Mammary epithelial cell (primary cell): ENCODE measurements at regions of chr1 and their contacts with region 1.

Region 1: DNA sequence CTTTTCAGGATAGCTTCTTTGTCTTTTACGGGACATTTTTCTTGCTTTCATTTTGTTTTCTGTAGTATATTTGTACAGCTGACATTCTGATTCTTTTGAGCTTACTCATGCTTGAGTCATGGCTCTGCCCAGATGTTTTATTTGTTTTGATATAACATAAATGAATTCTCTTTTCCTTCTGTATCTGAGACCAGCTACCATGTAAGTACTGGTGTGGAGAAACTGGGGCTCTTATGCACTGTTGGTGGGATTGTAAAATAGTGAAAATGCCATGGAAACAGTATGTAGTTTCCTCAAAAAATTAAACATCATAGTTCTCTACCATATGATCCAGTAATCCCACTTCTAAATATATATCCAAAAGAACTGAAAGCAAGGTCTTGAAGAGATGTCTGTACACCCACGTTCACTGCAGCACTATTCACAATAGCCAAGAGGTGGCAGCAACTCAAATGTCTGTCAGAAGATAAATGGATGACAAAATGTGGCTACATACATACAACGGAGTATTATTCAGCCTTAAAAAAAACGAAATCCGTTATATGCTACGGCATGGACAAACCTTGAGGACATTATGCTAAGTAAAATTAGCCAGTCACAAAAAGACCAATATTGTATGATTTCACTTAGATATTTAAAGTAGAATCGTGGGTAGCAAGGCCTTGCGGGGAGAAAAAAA is 61.4 kb downstream of the EIF2B3 start:
- DNase-seq: peak; percentile 70
- H3K4me3 ChIP-seq: peak overlapping the region in 1 of 3 experiments; percentile 29
- H3K27ac ChIP-seq: peak overlapping the region; percentile 14
- H3K4me1 ChIP-seq: peaks cover 9% of the 10 kb centered on the region
- H3K27me3 ChIP-seq: no peaks in the 10 kb centered on the region
- CTCF ChIP-seq: peak; percentile 44 to 51

Region 2: GRCh38 chr1:44994309-44994898 is 69.4 kb after region 1 on chr1:
- CTCF ChIA-PET with region 1: interaction called, 24 read pairs
- dilution Hi-C with region 1: no loop called
- in situ Hi-C with region 1: no loop called
- intact Hi-C with region 1: no loop called
- DNase-seq: no peak
- H3K4me3 ChIP-seq: no peak overlapping the region
- H3K27ac ChIP-seq: no peak overlapping the region
- H3K4me1 ChIP-seq: no peaks in the 10 kb centered on the region
- H3K27me3 ChIP-seq: no peaks in the 10 kb centered on the region
- CTCF ChIP-seq: no peak